ENCODE measurements at regions of chr10 and their contacts with region 1.

Region 1: DNA sequence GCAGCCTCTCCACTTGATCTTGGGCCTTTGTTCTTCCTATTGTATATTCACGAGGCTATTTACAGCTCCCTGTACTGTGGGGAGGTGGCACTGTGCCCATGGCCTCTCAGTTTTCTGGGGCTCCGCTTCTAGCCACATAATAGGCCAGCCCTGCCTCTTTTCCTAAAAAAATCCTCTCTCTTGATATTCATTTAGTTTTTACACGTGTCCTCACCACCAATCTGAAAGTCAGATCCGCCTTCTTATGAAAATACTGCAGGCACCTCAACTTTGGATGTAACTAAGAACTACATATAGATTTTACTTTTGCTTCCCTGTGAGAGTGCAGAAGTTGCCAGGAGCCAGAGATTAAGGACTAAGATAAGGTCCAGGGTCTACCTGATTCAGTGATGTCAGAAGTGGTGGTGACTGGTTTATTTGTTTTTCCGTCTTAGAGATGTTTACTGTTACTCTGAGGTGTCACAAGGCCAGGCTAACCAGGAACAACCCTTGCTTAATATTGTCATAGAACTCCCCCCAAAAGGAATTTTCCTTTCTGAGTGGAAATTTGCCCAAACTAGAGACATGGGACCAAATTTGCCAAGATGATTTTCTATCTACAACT is 7.8 kb downstream of the BAMBI start:
- DNase-seq: peak; percentile 43
- H3K4me3 Mint-ChIP-seq: peak overlapping the region; percentile 32
- H3K27ac Mint-ChIP-seq: peak overlapping the region; percentile 84
- H3K4me1 Mint-ChIP-seq: peaks cover 46% of the 10 kb centered on the region
- H3K27me3 Mint-ChIP-seq: no peaks in the 10 kb centered on the region
- CTCF ChIP-seq: no peak

Region 2: DNA sequence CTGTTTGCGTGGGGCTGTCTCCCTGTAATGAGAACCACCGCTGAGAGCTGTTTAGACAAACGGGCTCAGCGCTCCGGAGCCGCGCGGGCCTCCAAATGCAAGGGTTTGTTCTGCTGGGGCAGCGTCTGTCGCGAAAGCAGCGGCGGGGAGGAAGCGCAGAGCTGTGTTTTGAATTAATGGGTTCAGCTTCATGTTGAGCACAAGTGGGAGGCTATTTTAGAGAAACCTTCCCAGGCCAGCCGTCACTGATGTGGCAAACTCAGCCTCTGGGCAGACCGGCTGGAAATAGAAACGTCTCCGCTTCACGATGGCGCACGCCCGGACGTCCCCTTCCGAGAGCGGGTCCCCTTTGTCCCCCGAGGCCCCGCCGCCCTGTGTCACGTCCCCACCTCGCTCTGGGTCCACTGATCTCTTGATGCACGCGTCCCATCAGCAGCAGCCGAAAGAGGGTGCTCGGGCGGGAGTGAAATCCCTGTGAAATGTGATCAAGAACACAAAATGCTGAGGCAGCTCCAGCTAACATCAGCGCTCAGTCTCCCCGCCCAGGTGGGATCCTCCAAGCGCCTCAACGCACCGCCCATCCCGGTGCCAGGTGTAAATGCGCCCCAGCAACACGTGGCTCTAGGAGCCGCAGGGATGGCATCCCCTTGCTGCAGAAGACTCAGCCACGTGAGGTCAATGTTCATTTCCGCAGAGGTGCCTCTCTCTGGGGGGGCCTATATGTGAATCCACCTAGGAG is 37.1 kb after region 1 on chr10:
- CTCF ChIA-PET with region 1: no interaction called
- intact Hi-C with region 1: loop called (anchors 5 kb)
- DNase-seq: peak; percentile 54
- H3K4me3 Mint-ChIP-seq: peak overlapping the region; percentile 81
- H3K27ac Mint-ChIP-seq: no peak overlapping the region
- H3K4me1 Mint-ChIP-seq: peaks cover 9% of the 10 kb centered on the region
- H3K27me3 Mint-ChIP-seq: no peaks in the 10 kb centered on the region
- CTCF ChIP-seq: no peak

Region 3: DNA sequence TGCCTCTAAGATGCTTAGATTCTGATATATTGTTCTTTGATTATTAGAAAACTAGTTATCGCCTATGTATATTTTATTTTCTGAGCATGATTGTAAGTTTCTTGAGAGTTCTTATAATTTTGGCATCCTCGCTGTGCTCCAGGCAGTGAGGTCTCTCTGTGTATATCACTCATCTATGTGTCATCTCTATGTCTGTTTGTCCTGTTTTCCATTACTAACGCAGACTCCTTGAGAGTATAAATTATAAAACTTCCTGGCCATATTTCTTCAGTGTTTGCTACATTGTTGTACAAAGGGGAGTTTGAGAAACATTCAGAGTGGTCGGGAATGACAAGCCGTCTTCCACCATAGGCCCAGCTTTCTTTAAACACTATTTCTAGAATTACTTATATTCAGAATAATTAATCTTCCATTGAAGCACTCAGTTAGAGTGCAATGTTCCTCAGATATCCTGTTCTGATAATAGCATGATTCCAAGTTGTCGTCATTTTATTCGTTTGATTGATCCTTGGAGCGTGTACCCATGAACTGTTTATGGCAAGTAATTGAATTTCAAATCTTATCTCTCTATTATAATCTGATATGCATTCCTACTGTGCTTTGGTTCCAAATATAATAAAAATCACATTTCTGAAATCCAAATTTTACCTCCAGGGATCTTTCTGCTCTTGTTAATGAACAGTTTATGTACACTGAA is 198.8 kb after region 1 on chr10:
- CTCF ChIA-PET with region 1: no interaction called
- intact Hi-C with region 1: loop called (anchors 2 kb)
- DNase-seq: no peak
- H3K4me3 Mint-ChIP-seq: peak overlapping the region; percentile 26
- H3K27ac Mint-ChIP-seq: peak overlapping the region; percentile 82
- H3K4me1 Mint-ChIP-seq: peaks cover 47% of the 10 kb centered on the region
- H3K27me3 Mint-ChIP-seq: no peaks in the 10 kb centered on the region
- CTCF ChIP-seq: no peak